ENCODE measurements at regions of chr9 and their contacts with region 1.

Region 1: DNA sequence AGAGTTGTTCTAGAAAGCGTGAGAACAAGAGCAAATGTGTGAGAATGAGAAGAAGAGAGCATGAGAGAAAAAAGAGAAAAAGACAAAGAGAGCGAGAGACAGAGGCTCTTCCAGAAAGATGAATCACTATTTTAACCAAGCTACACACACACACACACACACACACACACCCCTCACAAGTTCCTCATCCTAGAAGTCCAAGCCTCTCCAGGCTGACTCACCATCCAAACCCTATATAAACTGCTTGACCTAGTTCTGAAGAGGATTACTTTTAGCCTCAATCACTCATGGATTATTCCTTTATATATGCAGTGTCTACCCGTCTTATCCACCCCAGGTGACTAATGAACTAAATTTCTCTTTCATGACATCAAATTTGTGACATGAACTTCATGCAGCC is 37.6 kb downstream of the C9orf57 start:
- DNase-seq: no peak
- ATAC-seq: no peak
- H3K4me3 ChIP-seq: no peak overlapping the region
- H3K4me3 Mint-ChIP-seq: no peak overlapping the region
- H3K27ac ChIP-seq: no peak overlapping the region
- H3K27ac Mint-ChIP-seq: no peak overlapping the region
- H3K4me1 ChIP-seq: no peaks in the 10 kb centered on the region
- H3K4me1 Mint-ChIP-seq: peaks cover 3% of the 10 kb centered on the region
- H3K27me3 ChIP-seq: no peaks in the 10 kb centered on the region
- H3K27me3 Mint-ChIP-seq: no peaks in the 10 kb centered on the region
- CTCF ChIP-seq: no peak

Region 2: DNA sequence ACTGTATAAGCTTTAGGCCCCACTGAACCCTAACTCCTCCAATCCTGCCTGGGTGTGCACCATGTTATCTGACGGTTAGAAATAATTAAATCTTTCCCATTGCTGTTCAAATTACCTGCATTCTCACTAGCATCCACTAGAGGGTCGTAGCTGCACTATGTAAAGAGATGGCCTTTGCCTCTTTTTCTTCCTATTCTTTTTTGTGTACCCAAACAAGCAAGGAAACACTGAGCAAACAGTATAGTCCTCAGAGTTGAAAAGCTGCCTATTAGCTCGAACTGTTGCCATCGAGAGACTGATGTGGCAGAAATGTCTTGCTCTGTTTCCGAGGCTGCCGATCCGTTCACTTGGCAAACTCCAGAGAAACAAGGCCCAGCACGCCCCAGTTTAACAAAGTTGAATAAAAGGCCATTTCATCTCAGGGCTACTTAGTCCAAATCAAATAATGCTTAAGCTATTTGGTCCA is 737.6 kb before region 1 on chr9:
- CTCF ChIA-PET with region 1: interaction called, 30 read pairs
- POLR2A ChIA-PET with region 1: no interaction called
- intact Hi-C with region 1: loop called (anchors 1 to 5 kb)
- DNase-seq: peak in 6 of 9 experiments; percentile 3 to 54 (median 27)
- ATAC-seq: peak; percentile 48
- H3K4me3 ChIP-seq: no peak overlapping the region
- H3K4me3 Mint-ChIP-seq: no peak overlapping the region
- H3K27ac ChIP-seq: no peak overlapping the region
- H3K27ac Mint-ChIP-seq: no peak overlapping the region
- H3K4me1 ChIP-seq: no peaks in the 10 kb centered on the region
- H3K4me1 Mint-ChIP-seq: no peaks in the 10 kb centered on the region
- H3K27me3 ChIP-seq: no peaks in the 10 kb centered on the region
- H3K27me3 Mint-ChIP-seq: peaks cover 11% of the 10 kb centered on the region
- CTCF ChIP-seq: peak; percentile 88

Region 3: DNA sequence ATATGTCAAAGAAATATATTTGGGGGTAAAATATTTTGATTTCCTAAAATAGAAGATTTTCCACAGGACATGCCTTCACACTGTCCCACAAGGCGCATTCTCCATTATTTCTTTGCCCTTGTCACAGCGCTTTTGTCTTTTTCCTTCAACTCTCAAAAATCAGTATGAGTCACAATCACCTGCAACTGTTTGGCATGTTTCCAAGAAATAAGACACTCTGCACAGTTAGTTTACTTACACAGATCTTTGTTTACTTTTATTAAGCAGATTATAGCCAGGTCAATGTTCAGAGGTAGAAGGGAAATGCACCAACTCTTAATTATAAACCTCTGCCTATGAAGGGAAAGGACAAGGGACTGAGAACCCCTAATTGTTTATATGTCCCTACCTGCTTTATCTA is 264.1 kb before region 1 on chr9:
- CTCF ChIA-PET with region 1: no interaction called
- POLR2A ChIA-PET with region 1: no interaction called
- intact Hi-C with region 1: loop called in 1 of 2 experiments (anchors 2 kb)
- DNase-seq: peak in 1 of 9 experiments; percentile 44
- ATAC-seq: peak; percentile 18
- H3K4me3 ChIP-seq: no peak overlapping the region
- H3K4me3 Mint-ChIP-seq: no peak overlapping the region
- H3K27ac ChIP-seq: no peak overlapping the region
- H3K27ac Mint-ChIP-seq: no peak overlapping the region
- H3K4me1 ChIP-seq: peaks cover 55% of the 10 kb centered on the region
- H3K4me1 Mint-ChIP-seq: peaks cover 85% of the 10 kb centered on the region
- H3K27me3 ChIP-seq: no peaks in the 10 kb centered on the region
- H3K27me3 Mint-ChIP-seq: no peaks in the 10 kb centered on the region
- CTCF ChIP-seq: no peak

Region 4: DNA sequence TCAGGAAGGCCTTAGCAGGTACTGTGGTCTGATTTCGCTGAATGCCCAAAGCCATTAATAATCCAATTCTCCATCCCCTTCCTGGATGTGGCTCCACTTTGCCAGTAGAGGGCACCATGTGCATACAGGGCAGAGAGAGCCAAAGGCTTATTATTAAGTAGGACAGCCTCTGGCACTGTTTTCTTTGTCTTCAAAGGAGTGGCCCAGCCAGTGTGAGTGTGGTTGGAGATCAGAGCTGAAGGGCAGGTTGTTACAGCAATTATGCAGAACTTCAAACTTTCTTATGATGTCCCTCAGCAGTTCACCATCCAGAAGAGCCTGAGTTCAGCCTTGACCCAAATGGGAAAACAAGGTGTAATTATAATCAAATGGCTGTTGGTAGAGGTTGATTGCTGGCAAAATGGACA is 215.9 kb before region 1 on chr9:
- CTCF ChIA-PET with region 1: interaction called, 36 read pairs
- POLR2A ChIA-PET with region 1: interaction called, 3 read pairs
- intact Hi-C with region 1: loop called (anchors 1 kb)
- DNase-seq: peak; percentile 12 to 80 (median 62)
- ATAC-seq: peak; percentile 96
- H3K4me3 ChIP-seq: no peak overlapping the region
- H3K4me3 Mint-ChIP-seq: no peak overlapping the region
- H3K27ac ChIP-seq: no peak overlapping the region
- H3K27ac Mint-ChIP-seq: peak overlapping the region; percentile 27
- H3K4me1 ChIP-seq: peaks cover 6% of the 10 kb centered on the region
- H3K4me1 Mint-ChIP-seq: peaks cover 15% of the 10 kb centered on the region
- H3K27me3 ChIP-seq: no peaks in the 10 kb centered on the region
- H3K27me3 Mint-ChIP-seq: no peaks in the 10 kb centered on the region
- CTCF ChIP-seq: peak; percentile 91

Region 5: GRCh38 chr9:72038890-72039410 is 16.1 kb after region 1 on chr9:
- CTCF ChIA-PET with region 1: interaction called, 64 read pairs
- POLR2A ChIA-PET with region 1: no interaction called
- intact Hi-C with region 1: no loop called
- DNase-seq: peak; percentile 22 to 78 (median 61)
- ATAC-seq: peak; percentile 67
- H3K4me3 ChIP-seq: no peak overlapping the region
- H3K4me3 Mint-ChIP-seq: no peak overlapping the region
- H3K27ac ChIP-seq: no peak overlapping the region
- H3K27ac Mint-ChIP-seq: no peak overlapping the region
- H3K4me1 ChIP-seq: no peaks in the 10 kb centered on the region
- H3K4me1 Mint-ChIP-seq: peaks cover 5% of the 10 kb centered on the region
- H3K27me3 ChIP-seq: no peaks in the 10 kb centered on the region
- H3K27me3 Mint-ChIP-seq: peaks cover 16% of the 10 kb centered on the region
- CTCF ChIP-seq: peak; percentile 87

Region 6: GRCh38 chr9:72065076-72065475 is 42.2 kb after region 1 on chr9:
- CTCF ChIA-PET with region 1: no interaction called
- POLR2A ChIA-PET with region 1: no interaction called
- intact Hi-C with region 1: no loop called
- DNase-seq: no peak
- ATAC-seq: no peak
- H3K4me3 ChIP-seq: no peak overlapping the region
- H3K4me3 Mint-ChIP-seq: no peak overlapping the region
- H3K27ac ChIP-seq: no peak overlapping the region
- H3K27ac Mint-ChIP-seq: no peak overlapping the region
- H3K4me1 ChIP-seq: no peaks in the 10 kb centered on the region
- H3K4me1 Mint-ChIP-seq: no peaks in the 10 kb centered on the region
- H3K27me3 ChIP-seq: peaks cover 0 to 2% of the 10 kb centered on the region in 2 experiments
- H3K27me3 Mint-ChIP-seq: peaks cover 18% of the 10 kb centered on the region
- CTCF ChIP-seq: no peak

Measured in CD8-positive, alpha-beta T cell (primary cell).